SK-N-SH (cell line): ENCODE measurements at regions of chr11 and their contacts with region 1.

Region 1: DNA sequence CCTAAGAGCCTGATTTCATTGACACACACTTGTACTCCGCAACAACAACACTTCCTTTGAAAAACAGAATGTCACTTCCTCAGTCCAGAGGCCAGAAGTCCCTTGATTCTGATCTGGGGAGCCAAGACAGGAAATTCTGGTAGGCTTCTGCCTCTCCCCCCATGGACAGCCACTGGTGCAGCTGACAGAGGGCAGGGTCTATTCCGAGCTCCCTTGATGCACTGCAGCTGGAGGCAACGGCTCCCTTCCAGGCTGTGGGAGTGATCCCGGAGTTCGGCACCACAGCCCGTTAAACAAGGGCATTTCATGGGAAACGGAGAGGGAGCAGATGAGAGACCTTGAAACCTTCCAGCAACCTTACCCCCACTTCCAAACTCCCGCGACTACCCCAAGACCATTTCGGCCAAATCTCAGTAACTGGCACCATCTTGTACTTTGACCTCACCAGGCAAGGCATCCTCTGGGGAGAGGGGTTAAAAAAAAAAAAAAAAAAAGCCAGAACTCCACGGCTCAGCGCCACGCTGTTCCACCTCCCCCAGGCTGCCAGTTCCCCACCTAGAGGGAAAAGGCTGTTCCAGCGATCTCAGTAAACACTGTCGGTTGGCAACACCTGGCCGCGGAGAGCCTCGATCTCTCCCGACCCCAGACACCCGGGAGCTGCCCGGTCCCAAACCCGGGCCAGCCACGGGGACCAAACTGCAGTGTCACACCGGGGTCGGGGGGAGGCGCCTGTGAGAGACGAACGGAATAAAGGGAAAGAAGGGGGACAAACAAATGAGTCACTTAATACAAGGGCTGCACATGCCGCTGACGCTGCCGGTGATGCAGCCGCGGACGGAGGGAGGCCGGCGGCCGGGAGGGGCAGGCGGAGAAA is 1.1 kb downstream of the GAB2 start:
- DNase-seq: peak; percentile 83
- H3K4me3 ChIP-seq: peak overlapping the region; percentile 71 to 81
- H3K27ac ChIP-seq: peak overlapping the region; percentile 92 to 100
- H3K4me1 ChIP-seq: peaks cover 18 to 41% of the 10 kb centered on the region in 2 experiments; a peak in 3 of 4 replicates
- H3K27me3 ChIP-seq: no peaks in the 10 kb centered on the region
- CTCF ChIP-seq: peak; percentile 57
- EP300 ChIP-seq: no peak; a peak in 1 of 4 replicates
- RAD21 ChIP-seq: peak; percentile 60

Region 2: DNA sequence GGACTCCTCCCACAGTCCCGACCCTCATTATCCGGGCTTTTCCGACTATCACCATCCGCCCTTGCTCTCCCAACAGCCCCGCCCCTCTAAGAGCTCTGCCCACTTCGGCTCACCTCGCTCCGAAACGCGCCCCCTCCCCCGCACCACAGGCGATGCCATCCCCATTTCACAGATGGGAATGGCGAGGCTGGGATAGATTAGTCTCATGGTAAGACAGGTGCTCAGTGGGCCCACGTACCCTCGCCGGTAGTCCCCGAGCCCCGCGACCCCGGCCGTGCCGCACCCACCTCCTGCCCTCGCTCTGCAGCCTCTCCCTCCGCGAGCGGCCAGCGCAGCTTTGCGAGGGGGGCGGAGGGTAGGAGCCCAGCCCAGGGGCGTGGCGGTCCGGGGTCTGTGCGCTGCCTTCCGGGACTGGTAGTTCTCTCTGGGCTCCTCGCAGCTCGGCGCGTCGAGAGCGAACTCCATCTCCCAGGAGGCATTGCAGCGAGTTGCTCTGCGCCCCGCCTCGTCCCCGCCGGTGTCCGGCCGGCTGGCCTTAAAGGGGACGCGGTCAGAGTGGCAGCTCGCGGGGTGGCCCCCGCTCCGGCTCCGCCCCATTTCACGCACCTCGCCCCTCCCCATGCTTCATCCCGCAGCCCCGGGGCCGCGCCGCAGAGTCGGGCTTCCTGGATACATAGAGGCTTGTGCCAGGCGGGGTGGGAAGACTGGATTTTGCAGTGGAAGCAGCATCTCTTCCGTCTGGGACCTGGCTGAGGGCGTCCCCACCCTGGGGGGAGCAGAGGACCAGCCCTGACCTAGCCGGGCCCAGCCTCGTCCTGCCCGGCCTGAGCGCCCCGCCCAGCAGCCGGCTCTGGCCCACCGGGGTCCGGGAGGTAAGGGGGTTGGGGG is 228.0 kb before region 1 on chr11 and contains the starts of genes KCTD21 and USP35:
- CTCF ChIA-PET with region 1: interaction called, 3 read pairs
- POLR2A ChIA-PET with region 1: interaction called, 13 read pairs
- DNase-seq: peak; percentile 98
- H3K4me3 ChIP-seq: peak within 1 kb of the TSS; percentile 74 to 98
- H3K27ac ChIP-seq: peak within 1 kb of the TSS; percentile 80 to 82; a peak in 3 of 4 replicates
- H3K4me1 ChIP-seq: peaks cover 21 to 32% of the 10 kb centered on the region in 2 experiments; a peak in 3 of 4 replicates
- H3K27me3 ChIP-seq: no peaks in the 10 kb centered on the region
- CTCF ChIP-seq: no peak
- EP300 ChIP-seq: no peak
- RAD21 ChIP-seq: no peak
- polyA plus RNA-seq, gene KCTD21: 5.0 and 7.5 TPM in 2 replicates
- polyA plus RNA-seq, gene USP35: 8.0 and 8.4 TPM in 2 replicates

Region 3: GRCh38 chr11:78228467-78228866 is 188.1 kb before region 1 on chr11:
- CTCF ChIA-PET with region 1: interaction called, 19 read pairs
- POLR2A ChIA-PET with region 1: interaction called, 6 read pairs
- DNase-seq: peak; percentile 72
- H3K4me3 ChIP-seq: no peak overlapping the region
- H3K27ac ChIP-seq: peak overlapping the region in 1 of 2 experiments; percentile 19; a peak in 2 of 4 replicates
- H3K4me1 ChIP-seq: peaks cover 0 to 21% of the 10 kb centered on the region in 2 experiments; a peak in 2 of 4 replicates
- H3K27me3 ChIP-seq: no peaks in the 10 kb centered on the region
- CTCF ChIP-seq: peak; percentile 60
- EP300 ChIP-seq: no peak
- RAD21 ChIP-seq: peak; percentile 92

Region 4: DNA sequence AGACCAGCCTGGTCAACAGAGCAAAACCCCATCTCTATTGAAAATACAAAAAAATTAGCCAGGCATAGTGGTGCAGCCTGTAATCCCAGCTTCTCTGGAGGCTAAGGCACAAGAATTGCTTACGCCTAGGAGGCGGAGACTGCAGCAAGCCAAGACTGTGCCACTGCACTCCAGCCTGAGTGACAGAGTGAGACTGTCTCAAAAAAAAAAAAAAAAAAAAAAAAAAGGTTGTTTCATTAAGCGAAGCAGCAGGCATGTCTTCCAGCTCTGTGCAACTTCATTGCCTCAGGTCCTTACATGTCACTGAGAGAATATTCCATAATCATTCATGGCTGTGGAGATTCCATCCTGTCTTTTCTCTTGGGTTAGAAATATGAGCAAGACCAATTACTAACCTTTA is 15.8 kb before region 1 on chr11:
- CTCF ChIA-PET with region 1: interaction called, 11 read pairs
- POLR2A ChIA-PET with region 1: no interaction called
- DNase-seq: peak; percentile 28
- H3K4me3 ChIP-seq: no peak overlapping the region
- H3K27ac ChIP-seq: no peak overlapping the region
- H3K4me1 ChIP-seq: peaks cover 3 to 6% of the 10 kb centered on the region in 2 experiments; a peak in 1 of 4 replicates
- H3K27me3 ChIP-seq: no peaks in the 10 kb centered on the region
- CTCF ChIP-seq: no peak
- EP300 ChIP-seq: no peak
- RAD21 ChIP-seq: no peak

Region 5: GRCh38 chr11:78432058-78432515 is 15.5 kb after region 1 on chr11:
- CTCF ChIA-PET with region 1: interaction called, 39 read pairs
- POLR2A ChIA-PET with region 1: interaction called, 8 read pairs
- DNase-seq: no peak
- H3K4me3 ChIP-seq: no peak overlapping the region; a peak in 1 of 4 replicates
- H3K27ac ChIP-seq: peak overlapping the region in 1 of 2 experiments; percentile 93; a peak in 2 of 4 replicates
- H3K4me1 ChIP-seq: peaks cover 4 to 36% of the 10 kb centered on the region in 2 experiments; a peak in 2 of 4 replicates
- H3K27me3 ChIP-seq: no peaks in the 10 kb centered on the region
- CTCF ChIP-seq: peak; percentile 68
- EP300 ChIP-seq: peak in 1 of 2 experiments; percentile 16; a peak in 1 of 4 replicates
- RAD21 ChIP-seq: peak; percentile 53

Region 6: DNA sequence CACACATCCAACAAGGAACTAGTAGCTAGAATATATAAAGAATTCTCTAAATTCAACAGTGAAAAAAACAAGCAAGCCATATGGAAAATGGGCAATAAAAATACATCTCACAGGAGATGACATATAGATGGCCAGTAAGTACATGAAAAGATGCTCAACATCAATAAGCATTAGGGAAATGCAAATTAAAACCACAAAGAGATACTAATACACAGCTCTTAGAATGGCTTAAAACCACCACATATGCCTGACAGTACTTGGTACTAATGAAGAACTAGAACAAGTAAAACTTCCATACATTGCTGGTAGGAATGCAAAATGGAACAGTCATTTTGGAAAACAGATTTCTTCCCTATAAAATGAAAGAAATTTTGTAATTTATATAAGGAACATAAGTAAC is 72.6 kb after region 1 on chr11:
- CTCF ChIA-PET with region 1: no interaction called
- POLR2A ChIA-PET with region 1: no interaction called
- DNase-seq: no peak
- H3K4me3 ChIP-seq: no peak overlapping the region
- H3K27ac ChIP-seq: no peak overlapping the region
- H3K4me1 ChIP-seq: no peaks in the 10 kb centered on the region
- H3K27me3 ChIP-seq: no peaks in the 10 kb centered on the region
- CTCF ChIP-seq: no peak
- EP300 ChIP-seq: no peak
- RAD21 ChIP-seq: no peak

Region 7: DNA sequence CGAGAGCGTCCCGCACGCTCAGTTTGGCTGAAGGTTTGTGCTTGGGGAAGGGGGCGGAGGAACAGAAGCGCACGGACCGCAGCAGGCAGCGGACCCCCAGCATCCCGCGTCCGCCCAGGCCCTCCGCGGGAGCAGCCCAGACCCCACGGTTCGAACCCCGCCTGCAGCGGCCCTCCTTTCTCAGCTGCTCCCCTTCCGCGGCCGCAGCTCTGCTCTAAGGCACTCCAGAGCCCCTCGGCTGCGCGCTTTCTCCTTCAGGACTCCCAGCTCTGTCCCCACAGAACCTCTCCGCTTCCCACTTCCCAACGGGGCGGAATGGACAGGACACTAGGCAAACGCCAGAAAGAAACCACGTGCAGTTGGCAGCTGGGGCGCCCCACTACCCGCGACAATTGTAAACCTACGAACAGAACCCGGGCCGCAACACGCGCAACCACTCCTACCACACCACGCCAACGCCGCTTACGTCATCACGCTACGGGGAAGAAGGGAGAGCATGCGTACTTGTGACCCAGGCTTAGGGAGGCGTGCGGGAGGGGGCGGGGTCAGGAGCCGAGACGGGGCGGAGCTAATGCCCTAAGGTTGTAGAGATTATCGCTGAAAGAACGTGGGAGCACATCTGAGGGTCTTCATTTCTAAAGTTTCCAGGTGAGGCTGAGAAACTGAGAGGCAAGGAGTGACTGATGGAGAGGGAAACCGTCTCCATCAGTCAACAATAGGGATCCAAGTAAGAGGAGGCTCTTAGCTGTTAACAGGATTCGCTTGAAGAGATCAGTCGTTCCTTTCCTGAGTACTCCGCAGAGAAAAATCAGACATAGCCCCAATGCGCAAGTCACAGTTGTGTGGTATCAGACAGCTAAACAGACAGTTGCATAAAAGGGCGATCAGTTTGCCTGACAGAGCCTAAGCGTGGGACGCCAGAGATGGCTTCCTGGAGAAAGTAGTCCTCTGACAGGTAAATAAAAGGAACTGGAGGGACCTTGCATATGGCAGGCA is 158.1 kb after region 1 on chr11 and contains the start of gene NARS2:
- CTCF ChIA-PET with region 1: interaction called, 10 read pairs
- POLR2A ChIA-PET with region 1: interaction called, 15 read pairs
- DNase-seq: peak; percentile 97
- H3K4me3 ChIP-seq: peak within 1 kb of the TSS; percentile 65 to 84
- H3K27ac ChIP-seq: peak within 1 kb of the TSS; percentile 71 to 93
- H3K4me1 ChIP-seq: peaks cover 0 to 11% of the 10 kb centered on the region in 2 experiments; a peak in 2 of 4 replicates
- H3K27me3 ChIP-seq: no peaks in the 10 kb centered on the region
- CTCF ChIP-seq: no peak
- EP300 ChIP-seq: no peak
- RAD21 ChIP-seq: no peak; the same call in 1 of the 2 replicates
- polyA plus RNA-seq, gene NARS2: 8.9 and 11.3 TPM in 2 replicates